ENCODE measurements at regions of chr14 and their contacts with region 1.

Region 1: GRCh38 chr14:58364316-58364715 is 31.4 kb upstream of the TOMM20L start:
- DNase-seq: no peak
- H3K4me3 Mint-ChIP-seq: no peak overlapping the region
- H3K27ac Mint-ChIP-seq: no peak overlapping the region
- H3K4me1 Mint-ChIP-seq: peaks cover 5% of the 10 kb centered on the region
- H3K27me3 Mint-ChIP-seq: no peaks in the 10 kb centered on the region

Region 2: GRCh38 chr14:58239244-58240195 is 124.8 kb before region 1 on chr14:
- CTCF ChIA-PET with region 1: no interaction called
- POLR2A ChIA-PET with region 1: no interaction called
- DNase-seq: peak; percentile 82
- H3K4me3 Mint-ChIP-seq: no peak overlapping the region
- H3K27ac Mint-ChIP-seq: no peak overlapping the region
- H3K4me1 Mint-ChIP-seq: peaks cover 28% of the 10 kb centered on the region
- H3K27me3 Mint-ChIP-seq: no peaks in the 10 kb centered on the region

Region 3: DNA sequence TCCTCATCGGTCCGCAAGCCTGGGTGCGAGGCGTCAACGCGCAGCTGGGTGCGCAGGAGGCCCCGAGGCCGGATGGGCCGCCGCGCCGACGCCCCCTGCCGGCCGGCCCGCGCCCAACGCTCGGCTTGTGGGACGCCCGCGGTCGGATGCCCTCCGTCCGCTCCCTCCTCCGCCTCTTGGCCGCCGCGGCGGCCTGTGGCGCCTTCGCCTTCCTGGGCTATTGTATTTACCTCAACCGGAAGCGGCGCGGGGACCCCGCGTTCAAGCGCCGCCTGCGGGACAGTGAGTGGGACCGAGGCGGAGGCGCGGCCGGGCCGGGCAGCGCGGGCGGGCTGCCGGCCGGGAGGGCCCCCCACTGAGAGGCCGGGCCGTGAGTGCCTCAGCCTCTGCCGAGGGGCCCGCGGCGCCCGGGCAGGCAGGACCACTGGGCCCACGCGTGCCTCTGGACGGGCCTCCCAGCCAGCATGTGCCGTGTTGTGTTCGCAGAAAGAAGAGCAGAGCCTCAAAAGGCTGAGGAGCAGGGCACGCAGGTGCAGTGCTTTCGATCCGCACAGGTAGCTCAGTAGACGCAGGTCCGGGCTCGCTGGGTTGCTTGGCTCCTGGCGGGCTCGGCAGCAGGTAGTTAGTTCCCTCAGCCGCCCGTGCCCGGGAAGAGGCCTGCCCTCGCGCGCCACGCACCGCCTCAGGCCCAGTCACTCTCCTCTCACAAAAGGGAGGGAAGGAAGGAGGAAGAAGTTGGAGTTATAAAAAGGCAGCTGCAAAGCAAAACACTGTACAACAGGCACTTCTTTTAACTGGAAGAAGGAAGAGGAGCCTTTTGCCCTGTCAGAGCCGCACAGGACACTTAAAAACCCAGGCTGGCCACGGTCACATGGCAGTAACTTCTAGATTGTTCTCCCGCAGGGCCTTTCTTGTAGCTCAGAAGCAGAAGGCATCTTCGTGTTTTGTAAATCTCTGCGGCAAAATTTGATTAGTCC is 31.8 kb after region 1 on chr14 and contains the start of gene TOMM20L:
- CTCF ChIA-PET with region 1: interaction called, 10 read pairs
- POLR2A ChIA-PET with region 1: no interaction called
- DNase-seq: peak; percentile 76
- H3K4me3 Mint-ChIP-seq: peak within 1 kb of the TSS; percentile 67
- H3K27ac Mint-ChIP-seq: peak within 1 kb of the TSS; percentile 32
- H3K4me1 Mint-ChIP-seq: peaks cover 13% of the 10 kb centered on the region
- H3K27me3 Mint-ChIP-seq: no peaks in the 10 kb centered on the region
- total RNA-seq, gene TOMM20L: not detected

Measured in activated CD4-positive, alpha-beta memory T cell treated with anti-CD3 and anti-CD28 coated beads, Interleukin-2, amount 10 ng/mL, durations not matched to agents 7 days and 5 days (primary cell).